ENCODE measurements at regions of chr17 and their contacts with region 1.

Region 1: DNA sequence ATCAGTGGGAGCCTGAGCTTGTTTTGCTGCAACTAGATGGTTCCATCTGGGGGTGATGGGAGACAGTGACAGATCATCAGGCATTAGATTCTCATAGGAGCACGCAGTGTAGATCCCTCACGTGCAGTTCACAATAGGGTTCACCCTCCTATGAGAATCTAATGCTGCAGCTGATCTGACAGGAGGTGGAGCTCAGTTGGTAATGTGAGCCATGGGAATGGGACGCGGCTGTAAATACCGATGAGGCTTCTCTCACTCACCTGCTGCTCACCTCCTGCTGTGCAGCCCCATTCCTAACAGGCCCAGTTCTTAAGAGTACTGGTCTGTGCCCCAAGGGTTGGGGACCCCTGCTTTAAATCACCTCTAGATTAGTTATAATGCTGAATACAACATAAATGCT is 137.5 kb upstream of the PLEKHM1 start:
- DNase-seq: no peak
- H3K4me3 Mint-ChIP-seq: no peak overlapping the region
- H3K27ac Mint-ChIP-seq: no peak overlapping the region
- H3K4me1 Mint-ChIP-seq: no peaks in the 10 kb centered on the region
- H3K27me3 Mint-ChIP-seq: no peaks in the 10 kb centered on the region
- CTCF ChIP-seq: no peak

Region 2: GRCh38 chr17:45675012-45675411 is 47.0 kb after region 1 on chr17:
- CTCF ChIA-PET with region 1: interaction called, 11 read pairs
- intact Hi-C with region 1: no loop called
- DNase-seq: no peak
- H3K4me3 Mint-ChIP-seq: no peak overlapping the region
- H3K27ac Mint-ChIP-seq: no peak overlapping the region
- H3K4me1 Mint-ChIP-seq: no peaks in the 10 kb centered on the region
- H3K27me3 Mint-ChIP-seq: peaks cover 90% of the 10 kb centered on the region
- CTCF ChIP-seq: no peak

Measured in Calu3 (cell line).